T-cell (primary cell): ENCODE measurements at regions of chr1 and their contacts with region 1.

Region 1: GRCh38 chr1:179175011-179175841 is 54.3 kb downstream of the ABL2 start:
- DNase-seq: no peak
- ATAC-seq: no peak
- H3K4me3 ChIP-seq: no peak overlapping the region
- H3K4me3 Mint-ChIP-seq: no peak overlapping the region
- H3K27ac ChIP-seq: no peak overlapping the region
- H3K27ac Mint-ChIP-seq: no peak overlapping the region
- H3K4me1 ChIP-seq: no peaks in the 10 kb centered on the region
- H3K4me1 Mint-ChIP-seq: peaks cover 0 to 5% (median 4%) of the 10 kb centered on the region in 3 donors
- H3K27me3 ChIP-seq: no peaks in the 10 kb centered on the region
- H3K27me3 Mint-ChIP-seq: no peaks in the 10 kb centered on the region

Region 2: GRCh38 chr1:179231923-179232322 is 56.7 kb after region 1 on chr1:
- CTCF ChIA-PET with region 1: no interaction called
- POLR2A ChIA-PET with region 1: no interaction called
- DNase-seq: no peak
- ATAC-seq: no peak
- H3K4me3 ChIP-seq: no peak overlapping the region
- H3K4me3 Mint-ChIP-seq: no peak overlapping the region
- H3K27ac ChIP-seq: no peak overlapping the region
- H3K27ac Mint-ChIP-seq: no peak overlapping the region
- H3K4me1 ChIP-seq: peaks cover 9 to 15% of the 10 kb centered on the region in 2 experiments
- H3K4me1 Mint-ChIP-seq: peaks cover 26 to 29% (median 28%) of the 10 kb centered on the region in 3 donors
- H3K27me3 ChIP-seq: no peaks in the 10 kb centered on the region
- H3K27me3 Mint-ChIP-seq: no peaks in the 10 kb centered on the region

Region 3: GRCh38 chr1:179761846-179762640 is 586.8 kb after region 1 on chr1:
- CTCF ChIA-PET with region 1: no interaction called
- POLR2A ChIA-PET with region 1: interaction called in 1 of 2 experiments, 10 read pairs
- DNase-seq: no peak
- ATAC-seq: no peak
- H3K4me3 ChIP-seq: no peak overlapping the region
- H3K4me3 Mint-ChIP-seq: no peak overlapping the region
- H3K27ac ChIP-seq: no peak overlapping the region
- H3K27ac Mint-ChIP-seq: no peak overlapping the region
- H3K4me1 ChIP-seq: no peaks in the 10 kb centered on the region
- H3K4me1 Mint-ChIP-seq: no peaks in the 10 kb centered on the region
- H3K27me3 ChIP-seq: no peaks in the 10 kb centered on the region
- H3K27me3 Mint-ChIP-seq: peaks cover 4 to 6% of the 10 kb centered on the region in 2 donors